ENCODE measurements at regions of chr15 and their contacts with region 1.

Region 1: DNA sequence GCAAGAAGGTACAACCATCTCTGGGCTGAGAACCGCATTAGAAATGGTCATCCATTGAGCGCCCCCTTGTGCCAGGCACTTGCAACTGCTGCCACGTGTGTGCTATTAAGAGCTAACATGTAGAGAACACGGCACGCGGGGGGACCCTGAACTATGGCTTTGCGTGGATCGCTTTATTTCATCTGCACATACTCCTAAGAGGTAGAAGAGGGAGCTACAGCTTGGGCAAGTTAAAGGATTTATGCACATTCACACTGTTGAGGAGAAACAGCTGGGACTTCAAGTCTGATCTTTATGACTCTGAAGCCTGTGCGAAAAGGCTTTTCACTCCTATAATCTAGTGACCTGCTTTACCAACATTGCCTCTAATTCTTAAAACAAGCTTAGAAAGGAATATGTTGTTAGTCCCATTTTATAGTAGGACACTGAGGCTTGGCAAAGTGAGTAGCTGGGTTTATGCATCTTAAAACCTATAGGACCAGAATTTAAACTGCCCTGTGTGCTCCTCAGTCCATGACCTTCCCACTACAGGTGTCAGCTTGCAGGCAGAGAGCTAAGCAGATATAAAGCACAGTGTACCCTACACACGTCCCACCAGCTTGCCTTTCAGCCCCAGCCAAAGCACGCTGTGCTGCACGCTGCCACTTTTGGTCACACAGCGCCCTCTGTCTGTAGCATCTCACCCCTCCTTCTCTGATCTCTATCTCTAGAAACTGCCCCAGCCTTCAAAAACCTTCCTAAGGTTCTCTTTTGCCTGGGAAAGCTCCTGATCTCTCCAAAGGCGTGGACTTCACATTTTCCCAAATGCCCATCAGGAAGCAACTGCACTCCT is 57.8 kb downstream of the STARD5 start:
- DNase-seq: peak; percentile 93
- H3K4me3 ChIP-seq: peak overlapping the region in 4 of 8 donors; percentile 6 to 55 (median 18)
- H3K27ac ChIP-seq: no peak overlapping the region
- H3K4me1 ChIP-seq: peaks cover 13 to 20% (median 16%) of the 10 kb centered on the region in 6 donors
- H3K27me3 ChIP-seq: no peaks in the 10 kb centered on the region
- CTCF ChIP-seq: peak; percentile 75 to 91 (median 82)
- POLR2A ChIP-seq: no peak

Region 2: DNA sequence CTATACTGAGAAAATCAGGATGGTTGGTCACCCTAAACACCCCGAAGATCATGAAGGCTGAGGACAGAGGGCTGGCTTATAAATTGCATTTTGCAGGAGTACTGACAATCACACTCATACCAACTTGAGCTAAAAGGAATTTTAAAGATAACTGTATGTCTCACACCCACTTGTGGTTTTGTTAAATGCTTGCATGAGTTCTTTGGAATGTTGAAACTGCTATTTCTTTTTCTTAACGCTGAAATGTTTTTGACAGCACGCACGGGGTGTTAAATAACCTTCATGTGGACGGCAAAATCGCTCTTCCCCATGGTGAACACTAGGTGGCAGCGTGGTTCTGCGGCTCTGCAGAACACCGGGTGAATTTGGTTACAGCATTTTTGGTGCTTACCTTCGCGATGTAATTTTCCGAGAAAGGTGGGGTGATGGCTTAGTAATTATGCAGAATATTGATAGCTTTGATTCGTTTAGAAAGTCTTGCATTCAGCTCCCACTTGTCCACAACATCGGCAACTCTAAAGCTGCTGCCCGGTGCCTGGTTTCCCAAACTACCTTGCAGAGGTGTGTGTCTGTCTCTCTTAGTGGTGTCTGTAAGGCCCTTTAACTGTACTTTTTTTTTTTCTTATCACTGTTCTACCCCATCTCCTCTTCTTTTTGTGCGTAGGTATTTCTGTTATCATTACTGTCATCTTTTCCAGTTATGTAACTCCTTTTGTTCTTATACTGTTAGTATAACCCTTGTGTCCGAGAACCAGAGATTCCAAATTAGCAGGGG is 810.3 kb before region 1 on chr15:
- intact Hi-C with region 1: loop called (anchors 10 kb)
- DNase-seq: no peak
- H3K4me3 ChIP-seq: no peak overlapping the region
- H3K27ac ChIP-seq: no peak overlapping the region
- H3K4me1 ChIP-seq: peaks cover 0 to 22% (median 11%) of the 10 kb centered on the region in 6 donors
- H3K27me3 ChIP-seq: peaks cover 0 to 25% (median 0%) of the 10 kb centered on the region in 7 donors
- CTCF ChIP-seq: peak; percentile 69 to 91 (median 86)
- POLR2A ChIP-seq: no peak

Region 3: DNA sequence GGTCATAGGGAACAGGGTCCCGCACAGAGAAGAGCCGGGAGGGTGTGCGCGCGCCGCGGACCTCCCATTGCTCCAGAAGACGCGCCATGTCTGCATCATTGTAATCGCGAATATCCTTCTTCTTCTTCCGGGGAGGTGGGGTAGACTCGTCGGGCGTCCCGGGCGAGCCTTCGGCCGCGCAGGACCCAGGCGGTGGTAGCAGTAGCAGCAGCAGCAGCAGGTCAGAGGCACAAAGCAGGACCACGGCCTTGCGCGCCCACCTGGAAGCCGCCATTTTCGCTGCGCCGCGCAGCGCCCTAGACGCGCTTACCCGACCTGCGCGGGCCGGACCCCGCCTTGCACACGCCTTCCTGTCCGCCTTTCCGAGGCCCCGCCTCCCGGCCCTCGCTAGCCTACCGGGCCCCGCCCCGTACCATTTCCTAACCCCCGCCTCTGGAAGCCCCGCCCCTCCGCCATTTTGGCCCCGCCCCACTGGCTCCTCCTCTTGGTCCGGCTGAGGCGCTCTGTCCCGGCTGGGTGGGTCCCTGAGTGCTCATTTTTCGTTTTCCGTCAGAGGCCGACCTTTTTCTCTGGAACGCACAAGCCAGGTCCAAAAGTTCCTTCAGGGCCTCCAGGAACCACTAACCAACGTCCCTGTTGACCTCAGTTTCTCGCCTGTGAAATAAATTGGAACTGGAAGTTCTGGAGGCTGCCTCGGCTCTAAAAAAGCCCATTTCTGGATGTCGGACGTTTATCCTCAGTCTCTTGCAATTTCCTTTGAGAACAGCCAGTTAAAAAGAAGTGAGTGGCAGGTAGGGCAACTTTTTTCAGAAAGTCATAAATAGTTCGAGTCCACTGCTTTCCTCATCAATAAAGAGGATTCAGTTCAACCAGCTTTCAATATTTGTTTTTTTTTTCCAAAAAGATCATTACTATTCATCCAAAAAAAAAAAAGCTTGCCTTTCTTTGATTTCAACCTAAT is 276.4 kb before region 1 on chr15 and contains the start of gene MESD:
- intact Hi-C with region 1: loop called (anchors 5 kb)
- DNase-seq: peak; percentile 99
- H3K4me3 ChIP-seq: peak within 1 kb of the TSS; percentile 74 to 93 (median 89)
- H3K27ac ChIP-seq: peak within 1 kb of the TSS; percentile 85 to 96 (median 92)
- H3K4me1 ChIP-seq: peaks cover 29 to 69% (median 59%) of the 10 kb centered on the region in 6 donors
- H3K27me3 ChIP-seq: no peaks in the 10 kb centered on the region
- CTCF ChIP-seq: peak in 1 of 11 experiments; percentile 43
- POLR2A ChIP-seq: peak in 2 of 3 donors; percentile 20 to 68
- total RNA-seq, gene MESD: 25.4 to 39.8 (median 29.1) TPM

Region 4: GRCh38 chr15:81106560-81106959 is 159.6 kb before region 1 on chr15:
- intact Hi-C with region 1: loop called (anchors 2 kb)
- DNase-seq: no peak
- H3K4me3 ChIP-seq: no peak overlapping the region
- H3K27ac ChIP-seq: no peak overlapping the region
- H3K4me1 ChIP-seq: peaks cover 0 to 6% (median 0%) of the 10 kb centered on the region in 6 donors
- H3K27me3 ChIP-seq: peaks cover 0 to 11% (median 0%) of the 10 kb centered on the region in 7 donors
- CTCF ChIP-seq: peak; percentile 47 to 81 (median 74)
- POLR2A ChIP-seq: no peak

Region 5: DNA sequence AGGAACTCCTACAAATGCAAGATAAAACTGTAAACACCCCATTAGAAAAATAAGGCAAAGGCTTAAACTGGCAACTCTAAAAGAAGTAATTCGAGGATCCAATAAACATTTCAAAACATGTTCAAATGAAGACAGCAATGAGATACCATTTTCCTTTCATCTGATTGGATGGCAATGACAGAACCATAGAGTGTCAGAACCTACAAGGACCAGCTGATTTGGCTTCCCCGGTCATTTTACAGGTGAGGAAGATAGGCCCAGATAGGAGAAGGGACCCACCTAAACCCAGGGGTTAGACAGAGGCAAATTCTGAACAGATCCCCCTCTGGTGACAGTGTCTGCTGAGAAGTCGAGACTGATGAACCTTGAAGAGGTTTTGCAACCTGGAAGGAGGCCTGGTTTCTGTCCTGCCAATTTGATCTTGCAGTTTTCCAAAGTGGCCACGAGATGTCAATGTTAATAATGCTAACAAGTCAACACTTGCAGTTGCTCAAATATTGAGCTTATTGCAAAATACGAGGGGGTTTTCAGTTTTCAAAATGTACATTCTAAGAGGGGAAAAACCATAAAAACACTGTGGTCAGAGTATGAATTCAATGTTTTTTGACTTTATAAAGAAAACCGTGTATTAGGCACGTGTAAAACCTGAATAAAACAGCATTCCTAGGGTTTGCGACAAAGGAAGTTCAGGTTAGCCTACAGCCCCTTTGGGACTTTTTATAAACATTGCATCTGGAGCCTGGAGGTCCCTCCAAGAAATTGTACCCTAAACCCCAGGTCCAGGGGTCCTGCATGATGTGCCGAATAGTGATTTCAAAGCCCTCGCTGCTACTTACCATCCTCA is 110.6 kb before region 1 on chr15:
- intact Hi-C with region 1: loop called (anchors 10 kb)
- DNase-seq: no peak
- H3K4me3 ChIP-seq: no peak overlapping the region
- H3K27ac ChIP-seq: no peak overlapping the region
- H3K4me1 ChIP-seq: peaks cover 0 to 7% (median under 1%) of the 10 kb centered on the region in 6 donors
- H3K27me3 ChIP-seq: peaks cover 0 to 3% (median 0%) of the 10 kb centered on the region in 7 donors
- CTCF ChIP-seq: peak in 8 of 11 experiments; percentile 32 to 60 (median 50)
- POLR2A ChIP-seq: no peak